Right ventricle myocardium superior (tissue), 1 donor: ENCODE measurements at regions of chr5 and their contacts with region 1.

Region 1: GRCh38 chr5:41524174-41524573 is 13.8 kb upstream of the PLCXD3 start:
- DNase-seq: no peak
- ATAC-seq: no peak

Region 2: DNA sequence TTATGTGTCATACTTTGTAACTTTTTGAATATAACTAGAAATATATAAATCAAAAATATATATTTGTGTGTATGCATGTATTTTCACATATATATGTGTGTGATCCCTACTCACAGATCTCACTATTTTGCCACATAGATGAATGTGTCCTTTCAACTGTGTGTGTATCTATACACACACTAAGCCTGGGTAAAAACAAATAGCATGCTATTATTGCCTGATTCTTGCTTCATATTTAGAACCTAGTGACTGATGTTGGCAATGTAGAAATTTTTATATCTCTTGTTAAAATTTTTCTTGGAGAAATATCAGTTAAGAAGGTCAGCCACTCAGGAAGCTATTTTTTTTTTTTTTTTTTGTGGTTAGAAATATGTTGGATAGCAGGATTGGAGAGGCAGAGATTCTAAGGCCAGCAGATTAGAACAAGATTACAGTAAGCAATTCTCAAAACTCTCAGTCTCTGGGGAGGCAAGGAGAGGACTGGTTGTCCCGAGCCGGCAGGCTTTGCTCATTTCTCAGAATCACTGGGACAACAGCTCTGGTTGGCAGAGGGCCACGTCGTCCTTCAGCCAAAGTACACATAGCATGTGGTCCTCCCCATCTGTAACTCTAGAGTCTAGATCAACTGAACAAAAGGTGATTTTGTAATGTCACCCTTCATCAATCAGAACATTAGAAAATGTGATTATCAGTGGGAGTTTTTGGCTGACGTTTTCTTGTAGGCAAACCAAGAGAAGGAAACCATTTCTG is 330.5 kb before region 1 on chr5:
- intact Hi-C with region 1: loop called (anchors 10 kb)
- DNase-seq: peak; percentile 99
- ATAC-seq: peak; percentile 98

Region 3: GRCh38 chr5:41270423-41271251 is 253.5 kb before region 1 on chr5:
- intact Hi-C with region 1: loop called (anchors 5 kb)
- DNase-seq: no peak
- ATAC-seq: peak; percentile 95